K562 (cell line): ENCODE measurements at regions of chr5 and their contacts with region 1.

Region 1: DNA sequence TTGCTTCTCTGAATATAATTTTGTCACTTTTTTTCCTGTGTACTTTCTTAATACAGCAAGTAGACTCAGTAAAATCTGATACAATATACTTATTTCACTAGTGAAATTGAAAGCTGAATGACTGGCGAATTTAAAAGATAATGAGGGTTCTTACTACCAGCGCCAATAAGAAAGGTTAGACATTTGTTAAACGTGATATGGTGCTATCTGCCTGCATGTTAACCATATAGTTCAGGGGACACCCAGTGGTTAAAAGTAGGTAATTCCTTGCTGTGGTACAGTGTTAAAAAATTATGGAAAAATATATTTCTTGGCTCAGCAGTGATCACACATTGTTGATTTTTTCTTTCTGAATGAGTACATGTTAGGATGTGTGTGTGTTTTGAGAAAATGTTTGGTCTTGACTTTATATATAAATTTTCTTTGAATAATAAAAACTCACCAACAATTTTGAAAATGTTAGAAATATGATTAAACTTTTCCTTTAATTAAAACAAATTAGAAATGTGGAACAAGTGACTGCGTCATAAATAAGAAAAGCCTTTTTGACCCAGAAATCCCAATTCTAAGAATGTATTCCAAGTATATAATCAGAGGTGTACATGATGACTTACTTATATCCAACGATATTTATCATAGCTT is 25.8 kb downstream of the CAST start:
- DNase-seq: peak; percentile 57 to 74 (median 66)
- ATAC-seq: peak; percentile 96
- H3K4me3 ChIP-seq: no peak overlapping the region
- H3K27ac ChIP-seq: no peak overlapping the region
- H3K4me1 ChIP-seq: peaks cover 0 to 4% of the 10 kb centered on the region in 2 experiments; a peak in 2 of 5 replicates
- H3K27me3 ChIP-seq: peaks cover under 1 to 3% of the 10 kb centered on the region in 2 experiments; a peak in 1 of 5 replicates
- CTCF ChIP-seq: peak; percentile 59 to 90 (median 60); a peak in 5 of 6 replicates
- EP300 ChIP-seq: 0 out of 2 replicates have a peak, but pooled peaks have one; percentile 13
- POLR2A ChIP-seq: no peak
- RAD21 ChIP-seq: peak; percentile 87 to 94

Region 2: GRCh38 chr5:96344678-96345577 is 343.0 kb before region 1 on chr5:
- CTCF ChIA-PET with region 1: no interaction called
- POLR2A ChIA-PET with region 1: no interaction called
- in situ Hi-C with region 1: no loop called
- intact Hi-C with region 1: loop called (anchors 5 kb)
- DNase-seq: peak; percentile 17 to 45 (median 29)
- ATAC-seq: peak; percentile 85
- H3K4me3 ChIP-seq: no peak overlapping the region
- H3K27ac ChIP-seq: no peak overlapping the region
- H3K4me1 ChIP-seq: no peaks in the 10 kb centered on the region; a peak in 1 of 5 replicates
- H3K27me3 ChIP-seq: no peaks in the 10 kb centered on the region; a peak in 1 of 5 replicates
- CTCF ChIP-seq: peak; percentile 36 to 70 (median 50); a peak in 4 of 6 replicates
- EP300 ChIP-seq: no peak
- POLR2A ChIP-seq: no peak
- RAD21 ChIP-seq: peak; percentile 80 to 85

Region 3: GRCh38 chr5:96651948-96652753 is 35.8 kb before region 1 on chr5:
- CTCF ChIA-PET with region 1: no interaction called
- POLR2A ChIA-PET with region 1: no interaction called
- in situ Hi-C with region 1: no loop called
- intact Hi-C with region 1: loop called (anchors 1 kb)
- DNase-seq: peak; percentile 24 to 45 (median 32)
- ATAC-seq: peak; percentile 93
- H3K4me3 ChIP-seq: no peak overlapping the region
- H3K27ac ChIP-seq: no peak overlapping the region
- H3K4me1 ChIP-seq: no peaks in the 10 kb centered on the region; a peak in 1 of 5 replicates
- H3K27me3 ChIP-seq: peaks cover 3 to 7% of the 10 kb centered on the region in 2 experiments; a peak in 4 of 5 replicates
- CTCF ChIP-seq: peak; percentile 53 to 62 (median 57)
- EP300 ChIP-seq: no peak
- POLR2A ChIP-seq: no peak
- RAD21 ChIP-seq: peak; percentile 9 to 47; a peak in 1 of 4 replicates

Region 4: DNA sequence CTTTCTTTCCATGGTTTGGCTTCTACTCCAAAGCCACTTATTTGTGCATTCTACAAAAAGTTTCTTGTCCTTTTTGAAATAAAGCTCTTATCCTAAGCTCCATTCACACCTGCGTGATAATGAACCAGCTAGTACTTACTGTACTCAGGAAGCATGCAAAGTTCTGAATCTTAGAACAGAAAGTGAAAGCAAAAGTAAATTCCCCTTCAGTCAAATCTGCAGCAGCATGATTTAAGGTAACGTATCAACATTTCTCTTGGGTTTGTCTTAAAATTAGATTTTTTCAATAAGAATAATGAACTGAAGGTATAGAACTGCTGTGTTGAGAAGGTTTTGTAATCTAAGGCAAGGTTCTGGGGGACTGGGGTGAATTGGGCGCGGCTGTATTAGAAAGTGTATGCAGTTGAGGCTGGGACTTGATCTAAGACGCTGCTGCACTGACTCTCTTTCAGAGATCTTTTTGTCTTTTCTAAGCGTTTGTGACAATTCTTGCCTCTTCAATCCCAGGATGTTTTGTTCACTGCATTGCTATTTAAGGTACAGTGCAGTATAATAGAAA is 188.4 kb after region 1 on chr5 and contains the start of gene ERAP2:
- CTCF ChIA-PET with region 1: no interaction called
- POLR2A ChIA-PET with region 1: no interaction called
- in situ Hi-C with region 1: no loop called
- intact Hi-C with region 1: no loop called
- DNase-seq: peak; percentile 20 to 56 (median 36)
- ATAC-seq: peak; percentile 72
- H3K4me3 ChIP-seq: peak within 1 kb of the TSS; percentile 52
- H3K27ac ChIP-seq: peak within 1 kb of the TSS; percentile 80
- H3K4me1 ChIP-seq: peaks cover 0 to 22% of the 10 kb centered on the region in 2 experiments; a peak in 3 of 5 replicates
- H3K27me3 ChIP-seq: no peaks in the 10 kb centered on the region
- CTCF ChIP-seq: no peak
- EP300 ChIP-seq: no peak
- POLR2A ChIP-seq: no peak; the same call in 1 of the 2 replicates
- RAD21 ChIP-seq: 0 out of 4 replicates have a peak, but pooled peaks of 1 of the 2 experiments have one; percentile 6
- polyA plus RNA-seq, gene ERAP2: 0.93 to 1.2 TPM